Prostate gland (tissue), 2 donors: ENCODE measurements at regions of chr7 and their contacts with region 1.

Region 1: GRCh38 chr7:152436111-152436930 is 518 bp upstream of the KMT2C start:
- DNase-seq: peak; percentile 92
- H3K4me3 ChIP-seq: peak overlapping the region; percentile 65 to 99
- H3K27ac ChIP-seq: peak overlapping the region; percentile 99
- H3K4me1 ChIP-seq: no peaks in the 10 kb centered on the region
- H3K27me3 ChIP-seq: no peaks in the 10 kb centered on the region
- CTCF ChIP-seq: no peak
- POLR2A ChIP-seq: peak; percentile 59

Region 2: GRCh38 chr7:151822541-151823181 is 613.7 kb before region 1 on chr7:
- intact Hi-C with region 1: no loop called
- DNase-seq: no peak
- H3K4me3 ChIP-seq: no peak overlapping the region
- H3K27ac ChIP-seq: no peak overlapping the region
- H3K4me1 ChIP-seq: peaks cover 3% of the 10 kb centered on the region
- H3K27me3 ChIP-seq: no peaks in the 10 kb centered on the region
- CTCF ChIP-seq: no peak
- POLR2A ChIP-seq: no peak

Region 3: DNA sequence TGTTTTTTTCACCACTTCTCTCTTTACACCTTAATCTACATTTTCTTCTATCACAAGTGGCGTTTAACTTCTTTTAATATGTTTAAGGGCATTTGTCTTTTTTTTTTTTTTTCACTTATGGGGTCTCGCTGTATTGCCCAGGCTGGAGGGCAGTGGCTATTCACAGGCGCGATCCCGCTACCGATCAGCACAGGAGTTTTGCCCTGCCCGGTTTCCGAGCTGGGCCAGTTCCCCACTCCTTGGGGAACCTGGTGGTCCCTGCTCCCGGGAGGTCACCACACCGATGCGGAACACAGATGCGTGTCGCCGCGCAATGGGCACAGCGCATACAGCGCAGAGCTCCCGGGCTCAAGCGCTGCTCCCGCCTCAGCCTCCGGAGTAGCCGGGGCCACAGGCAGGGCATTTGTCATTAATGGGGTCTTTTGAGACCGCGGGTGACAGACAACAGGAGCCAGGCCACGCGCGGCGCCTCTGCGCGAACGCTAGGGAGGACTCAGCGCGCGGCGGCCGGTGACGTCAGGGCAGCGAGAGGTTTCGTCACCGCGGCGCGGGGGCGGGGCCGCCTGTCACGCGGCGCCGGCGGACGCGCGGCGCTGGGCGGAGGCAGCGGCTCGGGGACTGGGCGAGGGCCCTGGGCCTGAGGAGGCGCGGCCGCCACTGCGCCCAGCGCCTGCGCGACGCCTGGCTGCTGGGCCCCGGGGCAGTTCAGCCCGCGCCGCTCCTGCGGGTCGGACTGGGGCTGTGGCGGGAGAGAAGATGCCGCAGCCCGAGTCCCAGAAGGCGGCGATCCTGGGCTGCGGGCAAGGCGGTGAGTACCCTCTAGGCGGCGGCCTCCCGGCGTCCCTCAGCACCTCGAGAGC is 411.0 kb before region 1 on chr7 and contains the start of gene GALNT11:
- intact Hi-C with region 1: loop called (anchors 10 kb)
- DNase-seq: peak; percentile 79
- H3K4me3 ChIP-seq: peak within 1 kb of the TSS; percentile 70 to 80
- H3K27ac ChIP-seq: peak within 1 kb of the TSS; percentile 92 to 93
- H3K4me1 ChIP-seq: no peaks in the 10 kb centered on the region
- H3K27me3 ChIP-seq: no peaks in the 10 kb centered on the region
- CTCF ChIP-seq: peak in 3 of 4 experiments; percentile 28 to 61 (median 57)
- POLR2A ChIP-seq: peak; percentile 82
- total RNA-seq, gene GALNT11: 50.3 to 76.2 TPM

Region 4: GRCh38 chr7:152354066-152354465 is 82.3 kb before region 1 on chr7:
- intact Hi-C with region 1: no loop called
- DNase-seq: no peak
- H3K4me3 ChIP-seq: no peak overlapping the region
- H3K27ac ChIP-seq: no peak overlapping the region
- H3K4me1 ChIP-seq: no peaks in the 10 kb centered on the region
- H3K27me3 ChIP-seq: no peaks in the 10 kb centered on the region
- CTCF ChIP-seq: no peak
- POLR2A ChIP-seq: no peak

Region 5: GRCh38 chr7:152463709-152464311 is 27.5 kb after region 1 on chr7:
- intact Hi-C with region 1: loop called (anchors 1 kb)
- DNase-seq: peak; percentile 100
- H3K4me3 ChIP-seq: peak overlapping the region; percentile 98
- H3K27ac ChIP-seq: peak overlapping the region; percentile 98 to 99
- H3K4me1 ChIP-seq: no peaks in the 10 kb centered on the region
- H3K27me3 ChIP-seq: no peaks in the 10 kb centered on the region
- CTCF ChIP-seq: peak in 1 of 4 experiments; percentile 9
- POLR2A ChIP-seq: peak; percentile 87